Mammary epithelial cell (primary cell): ENCODE measurements at regions of chr14 and their contacts with region 1.

Region 1: GRCh38 chr14:43503590-43503907 is 1003.5 kb downstream of the FSCB start:
- DNase-seq: no peak
- H3K4me3 ChIP-seq: no peak overlapping the region
- H3K27ac ChIP-seq: no peak overlapping the region
- H3K4me1 ChIP-seq: no peaks in the 10 kb centered on the region
- H3K27me3 ChIP-seq: no peaks in the 10 kb centered on the region
- CTCF ChIP-seq: peak in 1 of 2 donors; percentile 22

Region 2: GRCh38 chr14:42224053-42224888 is 1279.3 kb before region 1 on chr14:
- CTCF ChIA-PET with region 1: no interaction called
- dilution Hi-C with region 1: no loop called
- in situ Hi-C with region 1: no loop called
- intact Hi-C with region 1: loop called (anchors 10 kb)
- DNase-seq: peak; percentile 35
- H3K4me3 ChIP-seq: no peak overlapping the region
- H3K27ac ChIP-seq: no peak overlapping the region
- H3K4me1 ChIP-seq: peaks cover 8% of the 10 kb centered on the region
- H3K27me3 ChIP-seq: no peaks in the 10 kb centered on the region
- CTCF ChIP-seq: peak; percentile 79 to 83

Region 3: DNA sequence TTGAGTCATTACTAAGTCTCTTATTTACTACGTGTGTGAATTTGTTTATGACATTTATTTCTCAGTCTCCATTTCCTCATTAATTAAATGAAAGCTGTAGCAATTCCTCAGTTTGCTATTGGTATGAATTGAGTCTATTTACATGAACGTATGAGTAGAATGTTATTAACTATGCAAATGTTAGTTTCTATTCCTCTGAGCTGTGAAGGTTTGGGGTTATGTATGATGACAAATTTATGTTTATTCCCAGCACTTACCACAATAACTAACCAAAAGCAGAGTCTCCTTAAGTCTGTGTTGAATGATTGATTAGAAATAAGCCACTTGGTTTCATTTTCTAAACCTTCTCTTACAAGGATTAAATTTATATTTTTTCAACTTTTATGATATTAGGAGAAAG is 337.4 kb before region 1 on chr14:
- CTCF ChIA-PET with region 1: no interaction called
- dilution Hi-C with region 1: no loop called
- in situ Hi-C with region 1: no loop called
- intact Hi-C with region 1: no loop called
- DNase-seq: no peak
- H3K4me3 ChIP-seq: no peak overlapping the region
- H3K27ac ChIP-seq: no peak overlapping the region
- H3K4me1 ChIP-seq: no peaks in the 10 kb centered on the region
- H3K27me3 ChIP-seq: no peaks in the 10 kb centered on the region
- CTCF ChIP-seq: no peak

Region 4: DNA sequence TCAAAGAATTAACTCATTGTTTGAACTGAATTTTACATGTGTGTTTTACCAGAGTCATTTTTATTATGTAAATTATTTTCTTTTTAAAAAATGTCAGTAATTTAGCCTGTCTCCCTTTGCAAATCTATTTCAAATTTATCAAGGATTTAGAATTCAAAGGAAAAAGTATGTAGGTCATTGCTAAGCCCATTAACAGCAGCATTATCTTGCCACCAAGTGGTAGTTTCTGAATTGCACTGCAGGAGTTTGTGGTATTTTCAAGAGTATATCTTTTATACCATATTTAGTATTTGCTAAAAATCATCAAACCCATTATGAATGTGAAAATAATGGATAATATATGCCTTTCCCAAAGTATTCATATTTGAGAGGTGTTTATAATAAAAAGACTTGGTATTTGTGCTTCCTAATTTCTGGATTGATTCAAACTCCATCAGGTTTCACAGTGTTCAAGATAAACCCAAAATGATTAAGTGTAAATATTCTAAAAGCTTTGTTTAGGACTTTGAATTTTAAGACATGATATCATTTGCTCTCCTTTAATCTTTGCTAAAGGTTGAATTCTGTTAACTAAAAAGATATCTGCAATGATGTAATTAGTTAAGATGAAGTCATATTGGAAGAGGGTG is 292.2 kb after region 1 on chr14:
- CTCF ChIA-PET with region 1: no interaction called
- dilution Hi-C with region 1: no loop called
- in situ Hi-C with region 1: no loop called
- intact Hi-C with region 1: loop called (anchors 2 kb)
- DNase-seq: no peak
- H3K4me3 ChIP-seq: no peak overlapping the region
- H3K27ac ChIP-seq: no peak overlapping the region
- H3K4me1 ChIP-seq: no peaks in the 10 kb centered on the region
- H3K27me3 ChIP-seq: no peaks in the 10 kb centered on the region
- CTCF ChIP-seq: peak; percentile 20 to 43

Region 5: DNA sequence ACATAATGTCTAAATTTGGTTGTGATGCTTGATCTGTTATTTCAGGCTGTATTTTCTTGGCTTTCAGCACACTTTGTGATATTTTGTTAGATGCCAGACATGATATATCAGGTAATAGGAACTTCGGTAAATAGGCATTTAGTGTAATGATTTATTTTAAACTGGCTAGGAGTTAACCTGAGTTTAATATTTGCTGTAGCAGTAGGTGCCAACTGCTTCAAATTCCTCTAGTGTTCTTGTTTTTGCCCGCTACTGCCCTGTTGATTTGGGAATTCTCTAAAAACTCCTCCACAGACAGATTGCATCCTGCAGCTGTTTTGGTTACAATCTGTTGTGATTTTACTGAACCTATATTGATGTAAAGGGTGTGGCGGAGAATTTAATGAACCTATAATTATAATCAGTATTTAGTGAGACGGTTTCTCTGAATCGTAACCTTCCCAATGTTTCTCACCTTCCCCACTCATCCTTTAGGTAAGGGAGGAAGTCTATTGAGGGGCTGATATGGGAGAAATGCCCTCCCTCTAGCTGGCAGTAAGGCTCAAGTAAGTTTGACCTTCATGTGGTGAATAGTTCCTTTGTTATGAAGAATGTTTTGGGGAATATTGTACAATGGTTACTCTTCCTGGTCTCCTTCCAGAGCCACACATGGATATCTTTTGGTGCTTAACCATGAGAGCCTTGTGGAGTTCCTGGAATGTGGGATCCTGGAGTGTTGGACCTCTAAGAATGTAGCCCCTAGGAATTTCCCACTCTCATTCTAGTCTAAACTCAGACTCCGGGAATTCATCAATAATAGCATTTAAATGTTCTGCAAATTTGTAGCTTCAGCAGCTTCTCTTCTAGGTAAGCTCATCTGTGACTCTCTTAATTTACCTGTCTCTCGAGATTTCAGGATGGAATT is 369.5 kb after region 1 on chr14:
- CTCF ChIA-PET with region 1: no interaction called
- dilution Hi-C with region 1: no loop called
- in situ Hi-C with region 1: no loop called
- intact Hi-C with region 1: no loop called
- DNase-seq: no peak
- H3K4me3 ChIP-seq: no peak overlapping the region
- H3K27ac ChIP-seq: no peak overlapping the region
- H3K4me1 ChIP-seq: no peaks in the 10 kb centered on the region
- H3K27me3 ChIP-seq: no peaks in the 10 kb centered on the region
- CTCF ChIP-seq: no peak

Region 6: DNA sequence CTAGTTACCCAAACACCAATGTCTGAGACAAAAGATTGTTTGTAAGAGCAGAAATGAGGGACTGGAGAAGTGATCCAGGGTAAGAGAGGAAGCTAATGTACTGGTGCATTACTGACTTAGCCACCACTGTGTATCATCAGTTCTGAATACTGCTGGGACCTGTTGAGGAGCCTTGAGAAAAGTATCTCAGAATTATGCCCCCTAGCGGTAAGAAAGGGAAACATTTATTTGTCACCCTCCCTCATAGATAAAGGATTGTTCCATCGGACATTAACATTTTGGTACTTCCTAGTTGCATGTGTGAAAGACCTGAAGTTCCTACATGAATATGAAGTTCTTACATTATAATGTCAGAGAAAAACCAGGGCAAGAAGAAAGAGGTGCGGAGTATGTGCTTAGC is 391.0 kb after region 1 on chr14:
- CTCF ChIA-PET with region 1: no interaction called
- dilution Hi-C with region 1: no loop called
- in situ Hi-C with region 1: no loop called
- intact Hi-C with region 1: loop called (anchors 5 kb)
- DNase-seq: no peak
- H3K4me3 ChIP-seq: no peak overlapping the region
- H3K27ac ChIP-seq: no peak overlapping the region
- H3K4me1 ChIP-seq: no peaks in the 10 kb centered on the region
- H3K27me3 ChIP-seq: no peaks in the 10 kb centered on the region
- CTCF ChIP-seq: peak; percentile 16 to 29

Region 7: DNA sequence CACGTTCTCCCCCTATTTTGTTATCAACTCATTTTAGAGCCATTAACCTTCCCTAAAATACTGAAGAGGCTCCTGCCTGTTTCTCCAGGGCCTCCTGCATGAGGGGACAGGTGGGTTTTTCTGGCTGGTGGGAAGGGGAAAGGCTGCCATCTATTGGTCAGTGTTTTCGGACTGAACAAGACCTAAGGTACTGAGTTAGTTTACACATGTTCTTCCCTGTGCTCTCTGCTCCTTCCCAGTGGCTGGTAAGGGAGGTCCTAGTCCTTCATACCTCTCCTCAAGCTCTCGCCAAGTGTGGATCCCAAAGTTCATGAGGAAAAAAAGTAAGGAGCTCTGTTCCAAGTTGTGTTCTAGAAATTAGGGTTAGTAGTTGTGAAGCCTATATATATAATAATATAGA is 646.0 kb after region 1 on chr14:
- CTCF ChIA-PET with region 1: no interaction called
- dilution Hi-C with region 1: no loop called
- in situ Hi-C with region 1: no loop called
- intact Hi-C with region 1: loop called (anchors 5 kb)
- DNase-seq: peak; percentile 28
- H3K4me3 ChIP-seq: no peak overlapping the region
- H3K27ac ChIP-seq: no peak overlapping the region
- H3K4me1 ChIP-seq: no peaks in the 10 kb centered on the region
- H3K27me3 ChIP-seq: no peaks in the 10 kb centered on the region
- CTCF ChIP-seq: peak; percentile 23 to 60

Region 8: GRCh38 chr14:44803239-44803905 is 1299.8 kb after region 1 on chr14:
- CTCF ChIA-PET with region 1: no interaction called
- dilution Hi-C with region 1: no loop called
- in situ Hi-C with region 1: no loop called
- intact Hi-C with region 1: loop called (anchors 5 kb)
- DNase-seq: peak; percentile 46
- H3K4me3 ChIP-seq: no peak overlapping the region
- H3K27ac ChIP-seq: no peak overlapping the region
- H3K4me1 ChIP-seq: no peaks in the 10 kb centered on the region
- H3K27me3 ChIP-seq: no peaks in the 10 kb centered on the region
- CTCF ChIP-seq: peak; percentile 45 to 71